CD4-positive, alpha-beta memory T cell (primary cell): ENCODE measurements at regions of chr1 and their contacts with region 1.

Region 1: GRCh38 chr1:201114236-201115131 is 2.3 kb upstream of the CACNA1S start:
- DNase-seq: peak; percentile 69 to 79 (median 74)
- H3K4me3 ChIP-seq: peak overlapping the region; percentile 57 to 65
- H3K4me3 Mint-ChIP-seq: peak overlapping the region; percentile 89 to 96 (median 92)
- H3K27ac ChIP-seq: peak overlapping the region; percentile 38
- H3K27ac Mint-ChIP-seq: peak overlapping the region; percentile 75 to 93 (median 89)
- H3K4me1 ChIP-seq: peaks cover 11% of the 10 kb centered on the region
- H3K4me1 Mint-ChIP-seq: peaks cover 3 to 22% (median 10%) of the 10 kb centered on the region in 4 donors
- H3K27me3 ChIP-seq: no peaks in the 10 kb centered on the region
- H3K27me3 Mint-ChIP-seq: no peaks in the 10 kb centered on the region

Region 2: GRCh38 chr1:200558866-200559459 is 555.5 kb before region 1 on chr1:
- CTCF ChIA-PET with region 1: no interaction called
- POLR2A ChIA-PET with region 1: no interaction called
- intact Hi-C with region 1: loop called (anchors 10 kb)
- DNase-seq: peak in 4 of 5 donors; percentile 5 to 12 (median 10)
- H3K4me3 ChIP-seq: no peak overlapping the region
- H3K4me3 Mint-ChIP-seq: no peak overlapping the region
- H3K27ac ChIP-seq: no peak overlapping the region
- H3K27ac Mint-ChIP-seq: peak overlapping the region in 1 of 7 donors; percentile 65
- H3K4me1 ChIP-seq: no peaks in the 10 kb centered on the region
- H3K4me1 Mint-ChIP-seq: peaks cover 0 to 2% (median 0%) of the 10 kb centered on the region in 4 donors
- H3K27me3 ChIP-seq: no peaks in the 10 kb centered on the region
- H3K27me3 Mint-ChIP-seq: no peaks in the 10 kb centered on the region

Region 3: GRCh38 chr1:200979574-200980451 is 134.7 kb before region 1 on chr1:
- CTCF ChIA-PET with region 1: interaction called, 17 read pairs
- POLR2A ChIA-PET with region 1: interaction called, 3 read pairs
- intact Hi-C with region 1: loop called (anchors 1 kb)
- DNase-seq: peak; percentile 42 to 57 (median 53)
- H3K4me3 ChIP-seq: no peak overlapping the region
- H3K4me3 Mint-ChIP-seq: no peak overlapping the region
- H3K27ac ChIP-seq: no peak overlapping the region
- H3K27ac Mint-ChIP-seq: peak overlapping the region in 1 of 7 donors; percentile 61
- H3K4me1 ChIP-seq: no peaks in the 10 kb centered on the region
- H3K4me1 Mint-ChIP-seq: peaks cover 0 to 1% (median 0%) of the 10 kb centered on the region in 4 donors
- H3K27me3 ChIP-seq: no peaks in the 10 kb centered on the region
- H3K27me3 Mint-ChIP-seq: no peaks in the 10 kb centered on the region

Region 4: DNA sequence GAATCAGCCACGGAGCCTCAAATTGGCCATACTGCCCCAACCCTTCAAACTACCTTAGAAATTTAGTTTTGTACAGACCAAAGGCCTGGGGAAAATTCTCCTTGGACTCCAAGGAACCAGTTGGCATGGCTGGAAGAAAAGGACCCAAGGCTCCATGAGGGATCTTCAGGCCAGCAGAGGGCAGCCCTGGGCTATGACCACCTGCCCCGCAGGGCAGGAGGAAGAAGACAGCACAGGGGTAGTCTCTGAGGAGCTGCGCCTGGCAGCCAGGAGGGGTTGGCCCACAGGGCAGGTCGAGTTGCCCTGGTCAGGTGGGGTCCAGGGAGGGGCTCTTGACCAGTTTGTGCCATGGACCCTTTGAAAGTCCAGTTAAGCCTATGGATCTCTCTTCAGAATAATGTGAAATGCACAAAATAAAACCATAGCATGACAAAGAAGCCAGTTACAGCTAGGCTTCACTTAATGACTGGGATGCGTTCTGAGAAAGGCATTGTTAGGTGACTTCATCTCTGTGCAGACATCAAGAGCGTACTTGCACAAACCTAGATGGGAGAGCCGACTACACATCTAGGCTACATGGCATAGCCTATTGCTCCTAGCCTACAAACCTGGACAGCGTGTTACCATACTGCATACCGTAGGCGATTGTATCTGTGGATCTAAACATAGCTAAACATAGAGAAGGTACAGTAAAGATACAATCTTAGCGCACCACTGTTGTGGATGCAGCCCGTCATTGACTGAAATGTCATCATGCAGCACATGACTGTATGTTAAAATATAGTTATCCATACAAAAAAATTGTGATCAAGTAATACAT is 28.4 kb before region 1 on chr1:
- CTCF ChIA-PET with region 1: interaction called, 57 read pairs
- POLR2A ChIA-PET with region 1: interaction called, 9 read pairs
- intact Hi-C with region 1: loop called (anchors 1 kb)
- DNase-seq: peak in 4 of 5 donors; percentile 13 to 29 (median 20)
- H3K4me3 ChIP-seq: no peak overlapping the region
- H3K4me3 Mint-ChIP-seq: no peak overlapping the region
- H3K27ac ChIP-seq: no peak overlapping the region
- H3K27ac Mint-ChIP-seq: no peak overlapping the region
- H3K4me1 ChIP-seq: no peaks in the 10 kb centered on the region
- H3K4me1 Mint-ChIP-seq: peaks cover 0 to 1% (median under 1%) of the 10 kb centered on the region in 4 donors
- H3K27me3 ChIP-seq: no peaks in the 10 kb centered on the region
- H3K27me3 Mint-ChIP-seq: peaks cover 6 to 10% of the 10 kb centered on the region in 2 donors

Region 5: GRCh38 chr1:201154389-201155165 is 40.1 kb after region 1 on chr1 and contains the start of gene TMEM9:
- CTCF ChIA-PET with region 1: interaction called, 11 read pairs
- POLR2A ChIA-PET with region 1: interaction called, 8 read pairs
- intact Hi-C with region 1: loop called (anchors 1 kb)
- DNase-seq: peak; percentile 95 to 98 (median 96)
- H3K4me3 ChIP-seq: peak within 1 kb of the TSS; percentile 64 to 73
- H3K4me3 Mint-ChIP-seq: peak within 1 kb of the TSS; percentile 88 to 96 (median 92)
- H3K27ac ChIP-seq: peak within 1 kb of the TSS; percentile 48
- H3K27ac Mint-ChIP-seq: peak within 1 kb of the TSS; percentile 89 to 94 (median 94)
- H3K4me1 ChIP-seq: peaks cover 21% of the 10 kb centered on the region
- H3K4me1 Mint-ChIP-seq: peaks cover 18 to 33% (median 22%) of the 10 kb centered on the region in 4 donors
- H3K27me3 ChIP-seq: no peaks in the 10 kb centered on the region
- H3K27me3 Mint-ChIP-seq: peaks cover 6 to 18% of the 10 kb centered on the region in 2 donors
- total RNA-seq, gene TMEM9: 20.6 to 21.1 TPM

Region 6: DNA sequence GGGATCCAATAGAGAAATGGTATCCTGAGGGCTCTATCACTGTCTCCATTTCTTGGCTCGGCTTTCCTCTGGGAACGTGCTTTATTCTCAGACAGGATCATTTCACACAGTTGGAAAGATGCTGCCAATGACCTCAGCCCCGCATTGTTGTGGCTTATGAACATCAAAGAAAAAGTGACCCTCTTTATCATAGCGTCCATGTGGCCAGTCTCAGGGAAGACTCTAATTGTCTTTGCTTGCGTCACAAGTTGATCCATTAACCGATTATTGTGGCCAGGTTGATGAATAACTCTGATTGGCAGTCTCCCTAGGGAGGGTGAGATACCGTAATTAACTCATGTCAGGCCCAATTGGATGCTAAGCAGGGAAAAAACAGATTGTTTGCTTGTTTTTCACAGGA is 50.2 kb after region 1 on chr1:
- CTCF ChIA-PET with region 1: no interaction called
- POLR2A ChIA-PET with region 1: no interaction called
- intact Hi-C with region 1: no loop called
- DNase-seq: no peak
- H3K4me3 ChIP-seq: no peak overlapping the region
- H3K4me3 Mint-ChIP-seq: no peak overlapping the region
- H3K27ac ChIP-seq: no peak overlapping the region
- H3K27ac Mint-ChIP-seq: no peak overlapping the region
- H3K4me1 ChIP-seq: no peaks in the 10 kb centered on the region
- H3K4me1 Mint-ChIP-seq: no peaks in the 10 kb centered on the region
- H3K27me3 ChIP-seq: no peaks in the 10 kb centered on the region
- H3K27me3 Mint-ChIP-seq: peaks cover 5 to 7% of the 10 kb centered on the region in 2 donors

Region 7: DNA sequence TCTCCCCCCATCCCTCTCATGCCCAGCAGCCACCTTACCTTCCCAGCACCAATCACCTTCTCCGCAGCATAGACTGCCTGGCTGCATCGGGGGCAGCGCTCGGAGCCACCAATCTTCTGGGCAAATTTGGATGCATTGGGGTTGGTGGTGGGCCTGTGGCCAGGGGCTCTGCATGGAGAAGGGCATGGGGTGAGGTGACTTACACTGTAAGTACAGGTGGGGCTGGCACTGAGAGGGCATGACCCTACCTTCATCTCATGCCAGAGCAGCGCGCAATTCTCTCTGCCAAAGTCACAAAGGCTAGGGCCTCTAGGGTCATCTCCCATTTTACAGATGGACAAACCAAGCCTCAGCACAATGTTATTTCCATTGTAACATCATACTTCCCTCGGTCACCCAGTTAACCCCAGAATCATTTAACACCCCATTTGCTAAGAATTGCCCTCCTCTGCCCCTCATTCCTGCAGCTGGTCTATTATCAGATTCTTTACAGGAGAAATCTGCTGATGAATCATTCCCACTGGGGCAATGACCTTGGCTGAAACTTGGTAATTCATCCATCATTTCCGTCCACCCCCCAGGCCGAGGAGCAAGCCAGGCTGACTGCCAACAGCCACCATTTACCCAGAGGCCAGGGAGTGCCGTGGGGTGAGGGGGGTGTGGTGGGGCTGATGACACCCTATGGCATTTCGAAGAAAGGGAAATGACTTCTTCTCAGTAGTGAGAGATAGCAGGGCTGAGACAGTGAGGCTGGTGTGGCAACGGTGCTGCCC is 374.5 kb after region 1 on chr1:
- CTCF ChIA-PET with region 1: no interaction called
- POLR2A ChIA-PET with region 1: no interaction called
- intact Hi-C with region 1: no loop called
- DNase-seq: no peak
- H3K4me3 ChIP-seq: no peak overlapping the region
- H3K4me3 Mint-ChIP-seq: no peak overlapping the region
- H3K27ac ChIP-seq: no peak overlapping the region
- H3K27ac Mint-ChIP-seq: peak overlapping the region in 1 of 7 donors; percentile 42
- H3K4me1 ChIP-seq: no peaks in the 10 kb centered on the region
- H3K4me1 Mint-ChIP-seq: peaks cover 0 to 4% (median 1%) of the 10 kb centered on the region in 4 donors
- H3K27me3 ChIP-seq: no peaks in the 10 kb centered on the region
- H3K27me3 Mint-ChIP-seq: no peaks in the 10 kb centered on the region